Sigmoid colon (tissue), 7 donors: ENCODE measurements at regions of chr17 and their contacts with region 1.

Region 1: GRCh38 chr17:31394544-31394943 is 3.1 kb downstream of the RAB11FIP4 start:
- DNase-seq: no peak
- H3K4me3 ChIP-seq: no peak overlapping the region
- H3K27ac ChIP-seq: no peak overlapping the region
- H3K4me1 ChIP-seq: peaks cover 0 to 16% (median 12%) of the 10 kb centered on the region in 4 donors
- H3K27me3 ChIP-seq: peaks cover 17 to 69% (median 47%) of the 10 kb centered on the region in 3 donors
- CTCF ChIP-seq: no peak
- EP300 ChIP-seq: no peak
- POLR2A ChIP-seq: no peak

Region 2: GRCh38 chr17:31171701-31172100 is 222.8 kb before region 1 on chr17:
- intact Hi-C with region 1: no loop called
- DNase-seq: no peak
- H3K4me3 ChIP-seq: no peak overlapping the region
- H3K27ac ChIP-seq: no peak overlapping the region
- H3K4me1 ChIP-seq: no peaks in the 10 kb centered on the region
- H3K27me3 ChIP-seq: no peaks in the 10 kb centered on the region
- CTCF ChIP-seq: no peak
- EP300 ChIP-seq: no peak
- POLR2A ChIP-seq: no peak

Region 3: DNA sequence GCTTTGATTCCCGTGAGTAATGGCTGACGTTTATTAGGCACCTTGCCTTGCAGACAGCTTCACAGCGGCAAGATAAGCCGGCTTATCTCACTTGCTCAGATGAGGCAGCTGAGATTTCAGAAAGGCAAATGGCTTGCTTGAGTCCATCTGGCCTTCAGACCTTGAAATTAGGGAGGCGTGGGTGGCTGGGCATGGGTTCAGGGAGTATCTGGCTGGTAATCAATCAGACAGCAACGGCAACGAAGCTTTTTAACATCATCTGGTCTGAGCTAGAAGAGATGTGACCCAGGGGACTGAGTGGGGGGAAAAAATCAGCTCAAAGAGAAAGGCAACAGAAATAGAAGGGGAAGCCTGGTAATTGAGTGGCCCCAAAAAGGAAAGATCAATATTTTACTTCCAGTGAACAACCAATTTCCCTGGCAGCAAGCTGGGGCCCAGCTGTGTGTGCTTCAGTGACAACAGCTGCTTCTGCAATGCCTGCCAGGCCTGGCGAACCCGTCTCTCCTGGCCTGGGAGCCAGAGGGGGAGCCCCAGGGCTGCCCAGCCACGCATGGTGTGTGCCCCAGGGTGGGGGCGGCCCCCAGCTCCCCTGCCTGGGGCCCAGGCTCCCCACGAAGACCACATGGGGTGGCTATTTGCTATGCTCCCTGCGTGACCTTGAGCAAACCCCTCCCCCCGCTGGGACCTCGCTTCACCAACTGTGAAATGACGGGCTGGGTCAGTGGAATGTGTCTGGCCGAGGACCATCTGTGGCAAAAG is 30.9 kb after region 1 on chr17:
- intact Hi-C with region 1: no loop called
- DNase-seq: no peak
- H3K4me3 ChIP-seq: no peak overlapping the region
- H3K27ac ChIP-seq: no peak overlapping the region
- H3K4me1 ChIP-seq: no peaks in the 10 kb centered on the region
- H3K27me3 ChIP-seq: peaks cover 0 to 21% (median 5%) of the 10 kb centered on the region in 3 donors
- CTCF ChIP-seq: no peak
- EP300 ChIP-seq: no peak
- POLR2A ChIP-seq: no peak

Region 4: DNA sequence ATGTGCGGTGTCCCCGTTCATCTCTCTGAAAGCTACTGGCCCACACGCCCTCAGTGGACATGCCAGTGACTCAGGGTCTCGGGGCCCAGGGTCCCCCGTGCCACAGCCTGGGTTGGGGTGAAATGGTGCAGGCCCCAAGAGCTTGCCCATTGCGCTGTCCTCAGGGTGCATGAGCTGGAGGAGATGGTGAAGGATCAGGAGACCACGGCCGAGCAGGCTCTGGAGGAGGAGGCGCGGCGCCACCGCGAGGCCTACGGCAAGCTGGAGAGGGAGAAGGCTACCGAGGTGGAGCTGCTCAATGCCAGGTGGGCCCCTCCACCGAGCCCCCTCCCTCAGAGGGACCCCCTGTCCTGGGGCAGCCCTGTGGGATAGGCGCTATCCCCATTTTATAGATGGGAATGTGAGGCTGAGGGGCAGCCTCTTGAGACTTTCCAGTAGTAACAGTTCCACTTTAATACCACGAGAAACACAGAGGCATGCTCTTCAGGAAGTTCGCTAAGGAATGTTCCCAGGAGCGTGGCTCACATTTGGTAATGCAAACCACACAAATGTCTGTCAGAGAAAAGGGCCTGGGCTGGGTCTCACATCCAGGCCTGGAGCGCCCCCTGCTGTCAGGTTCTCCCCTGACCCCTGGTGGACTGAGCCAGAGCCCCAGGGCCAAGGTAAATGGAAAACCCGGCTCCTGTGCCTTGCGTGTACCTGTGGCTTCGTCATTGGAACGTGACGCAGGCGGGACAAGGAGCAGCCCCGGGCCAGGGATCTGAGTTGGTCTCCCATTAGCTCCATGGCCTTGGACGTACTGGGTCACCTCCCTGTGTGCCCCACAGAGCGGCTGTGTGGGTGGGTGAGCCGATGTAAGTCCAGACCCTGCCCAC is 130.6 kb after region 1 on chr17:
- intact Hi-C with region 1: loop called (anchors 5 kb)
- DNase-seq: peak; percentile 88
- H3K4me3 ChIP-seq: no peak overlapping the region
- H3K27ac ChIP-seq: no peak overlapping the region
- H3K4me1 ChIP-seq: no peaks in the 10 kb centered on the region
- H3K27me3 ChIP-seq: no peaks in the 10 kb centered on the region
- CTCF ChIP-seq: peak; percentile 45 to 87 (median 81)
- EP300 ChIP-seq: no peak
- POLR2A ChIP-seq: no peak